WTC11 (cell line): ENCODE measurements at regions of chr2 and their contacts with region 1.

Region 1: GRCh38 chr2:23926750-23927571 is at the start of gene ATAD2B:
- DNase-seq: peak; percentile 95
- ATAC-seq: peak; percentile 94
- H3K4me3 Mint-ChIP-seq: peak within 1 kb of the TSS; percentile 96
- H3K27ac Mint-ChIP-seq: peak within 1 kb of the TSS; percentile 99
- H3K4me1 Mint-ChIP-seq: peaks cover 21% of the 10 kb centered on the region
- H3K27me3 Mint-ChIP-seq: no peaks in the 10 kb centered on the region
- CTCF ChIP-seq: peak; percentile 52; the same call in 1 of the 2 replicates
- total RNA-seq, gene ATAD2B: 18.3 to 21.5 TPM (median 18.4 TPM) in 3 replicates

Region 2: DNA sequence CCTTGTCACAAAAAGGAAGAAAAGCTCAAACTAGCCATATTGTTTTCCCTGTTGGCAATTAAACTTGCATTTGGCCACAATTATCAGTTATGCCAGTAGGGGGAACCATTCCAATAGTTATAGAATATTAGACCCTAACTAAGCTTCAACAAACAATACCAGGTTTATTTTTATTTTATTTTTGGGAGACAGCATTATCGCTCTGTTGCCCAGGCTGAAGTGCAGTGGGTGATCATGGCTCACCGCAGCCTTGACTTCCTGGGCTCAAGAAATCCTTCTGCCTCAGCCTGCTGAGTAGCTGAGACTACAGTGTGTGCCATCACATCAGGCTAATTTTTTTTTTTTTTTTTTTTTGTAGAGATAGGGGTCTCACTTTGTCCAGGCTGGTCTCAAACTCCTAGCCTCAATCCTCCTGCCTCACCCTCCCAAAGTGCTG is 102.2 kb before region 1 on chr2:
- CTCF ChIA-PET with region 1: interaction called, 30 read pairs
- POLR2A ChIA-PET with region 1: interaction called, 7 read pairs
- DNase-seq: no peak
- ATAC-seq: peak; percentile 52
- H3K4me3 Mint-ChIP-seq: no peak overlapping the region
- H3K27ac Mint-ChIP-seq: no peak overlapping the region
- H3K4me1 Mint-ChIP-seq: no peaks in the 10 kb centered on the region
- H3K27me3 Mint-ChIP-seq: no peaks in the 10 kb centered on the region
- CTCF ChIP-seq: peak; percentile 54

Region 3: GRCh38 chr2:23939987-23940717 is 13.2 kb after region 1 on chr2 and contains the start of gene UBXN2A:
- CTCF ChIA-PET with region 1: interaction called, 43 read pairs
- POLR2A ChIA-PET with region 1: interaction called, 83 read pairs
- DNase-seq: peak; percentile 76
- ATAC-seq: peak; percentile 76
- H3K4me3 Mint-ChIP-seq: peak within 1 kb of the TSS; percentile 88
- H3K27ac Mint-ChIP-seq: peak within 1 kb of the TSS; percentile 91
- H3K4me1 Mint-ChIP-seq: peaks cover 28% of the 10 kb centered on the region
- H3K27me3 Mint-ChIP-seq: no peaks in the 10 kb centered on the region; the same call in 1 of the 2 replicates
- CTCF ChIP-seq: no peak
- total RNA-seq, gene UBXN2A: 15.4 to 16.8 TPM (median 16.7 TPM) in 3 replicates

Region 4: DNA sequence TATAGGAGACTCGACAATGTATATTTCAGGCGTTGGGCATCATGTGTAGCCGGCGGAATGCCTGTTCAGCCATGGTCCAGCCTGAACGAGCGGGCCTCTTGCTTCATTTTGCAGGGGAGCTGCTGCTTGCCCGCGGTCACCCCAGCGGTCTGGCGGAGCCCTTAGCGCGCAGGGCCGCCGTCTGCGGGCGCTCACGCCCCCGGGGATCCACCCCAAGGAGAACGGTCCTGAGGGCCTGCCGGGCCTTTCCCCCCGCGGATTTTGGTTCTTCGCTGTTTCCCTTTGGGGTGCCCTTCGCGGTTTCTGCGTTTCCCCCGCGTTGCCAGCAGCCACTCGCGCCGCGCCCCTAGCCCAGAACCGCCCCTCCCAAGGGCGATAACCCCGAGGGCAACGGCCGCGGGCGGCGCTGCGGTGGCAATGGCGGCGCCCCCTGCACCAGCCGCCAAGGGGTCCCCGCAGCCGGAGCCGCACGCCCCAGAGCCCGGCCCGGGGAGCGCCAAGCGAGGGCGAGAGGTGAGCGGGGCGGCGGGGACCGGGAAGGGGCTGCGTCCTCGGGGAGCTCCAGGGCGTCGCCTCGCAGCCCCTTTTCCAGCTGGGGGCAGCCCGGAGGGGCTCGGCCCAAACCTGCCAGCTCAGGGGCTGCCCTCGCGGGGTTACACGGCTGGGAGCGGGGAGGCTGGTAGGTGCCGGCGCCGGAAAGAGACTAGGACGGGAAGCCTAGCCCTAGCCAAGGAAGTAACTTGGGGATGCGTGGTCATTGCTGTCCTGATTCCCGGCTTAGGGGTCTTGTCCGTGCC is 82.9 kb after region 1 on chr2 and contains the start of gene MFSD2B:
- CTCF ChIA-PET with region 1: interaction called, 15 read pairs
- POLR2A ChIA-PET with region 1: interaction called, 5 read pairs
- DNase-seq: peak; percentile 45
- ATAC-seq: peak; percentile 73
- H3K4me3 Mint-ChIP-seq: peak within 1 kb of the TSS; percentile 54
- H3K27ac Mint-ChIP-seq: no peak within 1 kb of the TSS
- H3K4me1 Mint-ChIP-seq: peaks cover 21% of the 10 kb centered on the region
- H3K27me3 Mint-ChIP-seq: peaks cover 9% of the 10 kb centered on the region
- CTCF ChIP-seq: no peak
- total RNA-seq, gene MFSD2B: 0.42 to 0.55 TPM (median 0.50 TPM) in 3 replicates

Region 5: GRCh38 chr2:24046930-24047702 is 120.2 kb after region 1 on chr2 and contains the start of gene WDCP:
- CTCF ChIA-PET with region 1: interaction called, 14 read pairs
- POLR2A ChIA-PET with region 1: interaction called, 19 read pairs
- DNase-seq: peak; percentile 94
- ATAC-seq: peak; percentile 93
- H3K4me3 Mint-ChIP-seq: peak within 1 kb of the TSS; percentile 97
- H3K27ac Mint-ChIP-seq: peak within 1 kb of the TSS; percentile 92
- H3K4me1 Mint-ChIP-seq: peaks cover 26% of the 10 kb centered on the region
- H3K27me3 Mint-ChIP-seq: no peaks in the 10 kb centered on the region
- CTCF ChIP-seq: no peak
- total RNA-seq, gene WDCP: 30.5 to 33.6 TPM (median 31.9 TPM) in 3 replicates

Region 6: GRCh38 chr2:24075915-24076848 is 149.2 kb after region 1 on chr2 and contains the start of gene SF3B6:
- CTCF ChIA-PET with region 1: interaction called, 22 read pairs
- POLR2A ChIA-PET with region 1: interaction called, 20 read pairs
- DNase-seq: peak; percentile 100
- ATAC-seq: peak; percentile 87
- H3K4me3 Mint-ChIP-seq: peak within 1 kb of the TSS; percentile 96
- H3K27ac Mint-ChIP-seq: peak within 1 kb of the TSS; percentile 99
- H3K4me1 Mint-ChIP-seq: peaks cover 21% of the 10 kb centered on the region
- H3K27me3 Mint-ChIP-seq: no peaks in the 10 kb centered on the region
- CTCF ChIP-seq: no peak
- total RNA-seq, gene SF3B6: 117 to 128 TPM (median 126 TPM) in 3 replicates